ENCODE measurements at regions of chrX and their contacts with region 1.

Region 1: GRCh38 chrX:118878977-118879376 is 55.4 kb downstream of the ZCCHC12 start:
- H3K4me3 ChIP-seq: no peak overlapping the region
- H3K27ac ChIP-seq: no peak overlapping the region
- H3K4me1 ChIP-seq: no peaks in the 10 kb centered on the region
- CTCF ChIP-seq: no peak

Region 2: GRCh38 chrX:118655561-118656246 is 223.3 kb before region 1 on chrX:
- CTCF ChIA-PET with region 1: no interaction called
- POLR2A ChIA-PET with region 1: no interaction called
- H3K4me3 ChIP-seq: no peak overlapping the region
- H3K27ac ChIP-seq: no peak overlapping the region
- H3K4me1 ChIP-seq: 0 out of 2 replicates have a peak, but pooled peaks cover 3% of the 10 kb centered on the region
- CTCF ChIP-seq: no peak

Region 3: GRCh38 chrX:119093991-119094737 is 215.2 kb after region 1 on chrX:
- CTCF ChIA-PET with region 1: no interaction called
- POLR2A ChIA-PET with region 1: interaction called, 10 read pairs
- H3K4me3 ChIP-seq: no peak overlapping the region
- H3K27ac ChIP-seq: no peak overlapping the region
- H3K4me1 ChIP-seq: peaks cover 3% of the 10 kb centered on the region; the same call in 1 of the 2 replicates
- CTCF ChIP-seq: no peak